Activated CD4-positive, alpha-beta T cell treated with anti-CD3 and anti-CD28 coated beads for 36 hours (primary cell): ENCODE measurements at regions of chr1 and their contacts with region 1.

Region 1: GRCh38 chr1:246002725-246003441 is 504.2 kb downstream of the SMYD3 start:
- DNase-seq: peak; percentile 92
- ATAC-seq: peak; percentile 74
- H3K4me3 Mint-ChIP-seq: no peak overlapping the region
- H3K27ac Mint-ChIP-seq: no peak overlapping the region
- H3K4me1 Mint-ChIP-seq: no peaks in the 10 kb centered on the region
- H3K27me3 Mint-ChIP-seq: no peaks in the 10 kb centered on the region

Region 2: GRCh38 chr1:245079021-245079609 is 923.8 kb before region 1 on chr1:
- CTCF ChIA-PET with region 1: no interaction called
- POLR2A ChIA-PET with region 1: no interaction called
- intact Hi-C with region 1: loop called in 1 of 2 experiments (anchors 1 kb)
- DNase-seq: no peak
- ATAC-seq: no peak
- H3K4me3 Mint-ChIP-seq: no peak overlapping the region
- H3K27ac Mint-ChIP-seq: no peak overlapping the region
- H3K4me1 Mint-ChIP-seq: no peaks in the 10 kb centered on the region
- H3K27me3 Mint-ChIP-seq: peaks cover 4% of the 10 kb centered on the region

Region 3: GRCh38 chr1:245107776-245108645 is 894.9 kb before region 1 on chr1:
- CTCF ChIA-PET with region 1: no interaction called
- POLR2A ChIA-PET with region 1: no interaction called
- intact Hi-C with region 1: no loop called
- DNase-seq: no peak
- ATAC-seq: no peak
- H3K4me3 Mint-ChIP-seq: no peak overlapping the region
- H3K27ac Mint-ChIP-seq: no peak overlapping the region
- H3K4me1 Mint-ChIP-seq: no peaks in the 10 kb centered on the region
- H3K27me3 Mint-ChIP-seq: no peaks in the 10 kb centered on the region

Region 4: GRCh38 chr1:245666412-245666811 is 336.5 kb before region 1 on chr1:
- CTCF ChIA-PET with region 1: no interaction called
- POLR2A ChIA-PET with region 1: no interaction called
- intact Hi-C with region 1: loop called in 1 of 2 experiments (anchors 10 kb)
- DNase-seq: no peak
- ATAC-seq: no peak
- H3K4me3 Mint-ChIP-seq: no peak overlapping the region
- H3K27ac Mint-ChIP-seq: no peak overlapping the region
- H3K4me1 Mint-ChIP-seq: no peaks in the 10 kb centered on the region
- H3K27me3 Mint-ChIP-seq: no peaks in the 10 kb centered on the region

Region 5: GRCh38 chr1:245888809-245889208 is 114.1 kb before region 1 on chr1:
- CTCF ChIA-PET with region 1: interaction called, 4 read pairs
- POLR2A ChIA-PET with region 1: no interaction called
- intact Hi-C with region 1: loop called (anchors 1 to 2 kb)
- DNase-seq: no peak
- ATAC-seq: no peak
- H3K4me3 Mint-ChIP-seq: no peak overlapping the region
- H3K27ac Mint-ChIP-seq: no peak overlapping the region
- H3K4me1 Mint-ChIP-seq: no peaks in the 10 kb centered on the region
- H3K27me3 Mint-ChIP-seq: no peaks in the 10 kb centered on the region